ENCODE measurements at regions of chr10 and their contacts with region 1.

Region 1: GRCh38 chr10:102151774-102152544 is at the start of gene NOLC1:
- DNase-seq: peak; percentile 100
- H3K4me3 Mint-ChIP-seq: peak within 1 kb of the TSS; percentile 98
- H3K27ac Mint-ChIP-seq: peak within 1 kb of the TSS; percentile 98
- H3K4me1 Mint-ChIP-seq: peaks cover 28% of the 10 kb centered on the region
- H3K27me3 Mint-ChIP-seq: no peaks in the 10 kb centered on the region
- total RNA-seq, gene NOLC1: 260 and 271 TPM in 2 replicates

Region 2: DNA sequence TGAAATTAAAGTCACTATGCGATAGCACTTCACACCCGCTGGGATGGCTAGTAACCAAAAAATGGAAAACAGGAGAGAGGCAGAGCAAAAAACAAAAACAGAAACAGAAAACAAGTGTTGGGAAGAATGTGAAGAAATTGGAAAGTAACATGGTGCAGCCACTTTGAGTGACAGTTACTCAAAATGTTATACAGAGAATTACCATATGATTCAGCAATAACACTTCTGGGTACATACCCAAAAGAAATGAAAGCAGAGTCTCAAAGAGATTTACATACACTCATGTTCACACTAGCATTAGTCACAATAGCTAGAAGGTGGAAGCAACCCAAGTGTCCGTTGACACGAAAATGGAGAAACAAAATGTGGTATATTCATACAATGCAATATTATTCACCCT is 219.8 kb before region 1 on chr10:
- intact Hi-C with region 1: no loop called
- DNase-seq: no peak
- H3K4me3 Mint-ChIP-seq: no peak overlapping the region
- H3K27ac Mint-ChIP-seq: peak overlapping the region; percentile 20
- H3K4me1 Mint-ChIP-seq: peaks cover 9% of the 10 kb centered on the region
- H3K27me3 Mint-ChIP-seq: no peaks in the 10 kb centered on the region

Region 3: DNA sequence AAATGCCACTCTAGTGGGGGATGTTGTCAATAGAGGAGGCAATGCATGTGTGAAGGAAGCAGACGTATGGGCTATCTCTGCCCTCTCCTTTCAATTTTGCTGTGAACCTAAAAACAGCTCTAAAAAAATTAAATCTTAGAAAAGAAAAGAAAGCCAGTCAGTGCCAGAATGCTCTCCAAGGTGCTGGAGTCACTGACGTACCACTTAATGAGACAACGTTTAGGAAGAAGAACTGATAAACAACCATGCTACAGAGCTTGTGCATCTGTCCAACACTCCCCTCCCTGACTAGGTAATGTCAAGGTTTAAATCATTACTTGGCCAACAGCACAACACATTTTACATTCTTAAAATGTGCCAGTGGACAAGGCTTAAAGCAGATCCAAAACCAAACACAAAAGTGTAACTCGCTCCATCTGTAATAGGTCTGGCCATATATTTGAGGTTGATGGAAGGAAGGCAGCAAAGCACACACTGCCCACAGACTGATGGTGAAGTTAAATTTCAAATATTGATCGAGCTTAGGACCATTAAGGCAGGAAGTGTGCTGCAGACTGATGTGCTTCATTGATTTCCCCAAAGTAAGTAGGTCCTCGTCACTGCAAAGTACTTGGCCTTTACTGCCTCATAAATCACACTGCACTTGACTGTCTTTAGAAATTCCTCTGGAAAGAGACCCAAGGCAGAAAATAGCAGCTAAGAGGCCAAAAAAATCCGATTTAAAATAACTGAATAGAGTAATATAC is 111.5 kb before region 1 on chr10:
- intact Hi-C with region 1: no loop called
- DNase-seq: no peak
- H3K4me3 Mint-ChIP-seq: no peak overlapping the region
- H3K27ac Mint-ChIP-seq: no peak overlapping the region
- H3K4me1 Mint-ChIP-seq: peaks cover 6% of the 10 kb centered on the region
- H3K27me3 Mint-ChIP-seq: no peaks in the 10 kb centered on the region

Region 4: DNA sequence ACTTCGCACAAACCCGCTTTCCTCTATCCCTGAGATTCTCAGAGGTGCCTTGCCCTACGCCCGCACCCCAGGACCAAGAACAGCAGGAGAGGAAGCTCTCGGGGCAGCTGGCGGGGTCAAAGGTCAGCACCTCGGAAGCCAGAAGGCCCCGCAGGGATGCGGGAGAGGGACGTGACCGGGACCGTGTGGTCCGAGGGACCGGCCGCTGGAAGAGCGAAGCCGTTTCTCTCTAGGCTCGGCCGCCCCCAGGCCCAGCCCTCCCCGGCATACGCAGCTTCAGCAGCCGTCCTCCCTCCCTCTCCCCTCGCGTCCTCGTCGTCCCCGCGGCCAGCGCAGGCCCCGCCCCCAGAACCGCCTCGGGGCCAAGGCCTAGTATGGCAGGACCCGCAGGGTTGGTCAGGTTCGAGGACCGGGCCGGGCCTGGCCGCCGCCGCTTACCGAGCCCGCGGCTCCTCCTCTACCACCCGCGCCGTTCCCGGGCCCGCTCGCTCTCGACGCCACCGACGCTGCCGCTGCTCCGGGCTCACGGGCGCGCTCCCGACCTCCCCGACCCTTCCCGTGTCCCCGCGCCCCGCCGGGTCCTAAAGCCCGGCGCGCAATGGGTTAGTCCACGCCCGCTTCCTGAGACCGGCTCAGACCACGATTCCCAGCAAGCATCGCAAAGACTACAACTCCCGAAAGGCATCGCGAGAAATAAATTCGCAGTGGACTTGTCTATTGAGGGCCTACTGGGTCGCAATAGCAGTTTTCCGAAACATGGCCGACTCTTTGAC is 96.1 kb before region 1 on chr10 and contains the start of gene ARMH3:
- intact Hi-C with region 1: loop called (anchors 2 kb)
- DNase-seq: peak; percentile 90
- H3K4me3 Mint-ChIP-seq: peak within 1 kb of the TSS; percentile 89
- H3K27ac Mint-ChIP-seq: peak within 1 kb of the TSS; percentile 94
- H3K4me1 Mint-ChIP-seq: peaks cover 31% of the 10 kb centered on the region
- H3K27me3 Mint-ChIP-seq: no peaks in the 10 kb centered on the region
- total RNA-seq, gene ARMH3: 21.5 and 24.8 TPM in 2 replicates

Region 5: DNA sequence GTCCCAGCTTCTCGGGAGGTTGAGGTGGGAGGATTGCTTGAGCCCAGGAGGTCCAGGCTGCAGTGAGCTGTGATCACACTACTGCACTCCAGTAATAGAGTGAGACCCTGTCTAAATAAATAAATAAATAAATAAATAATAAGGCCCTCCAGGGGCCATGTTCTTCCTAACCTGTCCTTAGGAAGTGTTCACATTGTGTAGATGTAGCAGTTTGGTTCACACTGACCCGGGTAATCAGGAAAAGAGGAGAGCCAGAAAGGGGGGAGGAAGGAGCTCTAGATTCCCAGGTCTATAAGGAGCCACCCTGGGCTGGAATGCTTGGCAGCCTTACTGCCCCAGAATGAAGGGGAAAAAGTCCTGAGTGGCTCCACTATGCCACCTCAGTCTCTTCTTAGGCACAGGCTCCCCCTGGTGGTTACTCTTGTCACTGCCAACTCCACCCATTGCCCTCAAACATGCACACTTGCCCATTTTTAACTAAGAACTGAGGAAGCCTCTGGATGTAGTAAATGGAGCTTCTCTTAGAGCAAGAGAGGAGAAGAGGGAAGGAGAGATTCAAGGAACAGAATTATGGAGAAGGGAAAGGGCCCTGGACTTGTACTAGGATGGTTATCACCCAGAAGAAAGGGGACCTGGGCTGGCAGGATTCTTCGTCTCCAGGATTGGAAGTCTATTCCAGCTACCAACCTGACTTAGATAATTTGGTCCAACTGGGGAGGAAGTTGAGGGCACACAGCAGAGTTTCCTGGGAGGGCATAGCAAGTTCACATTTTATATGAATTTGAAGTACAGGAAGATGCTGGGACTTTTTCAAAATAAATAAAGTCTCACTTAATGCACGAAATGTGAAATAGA is 79.1 kb before region 1 on chr10:
- intact Hi-C with region 1: no loop called
- DNase-seq: peak; percentile 67
- H3K4me3 Mint-ChIP-seq: no peak overlapping the region
- H3K27ac Mint-ChIP-seq: no peak overlapping the region
- H3K4me1 Mint-ChIP-seq: peaks cover 6% of the 10 kb centered on the region
- H3K27me3 Mint-ChIP-seq: no peaks in the 10 kb centered on the region

Region 6: DNA sequence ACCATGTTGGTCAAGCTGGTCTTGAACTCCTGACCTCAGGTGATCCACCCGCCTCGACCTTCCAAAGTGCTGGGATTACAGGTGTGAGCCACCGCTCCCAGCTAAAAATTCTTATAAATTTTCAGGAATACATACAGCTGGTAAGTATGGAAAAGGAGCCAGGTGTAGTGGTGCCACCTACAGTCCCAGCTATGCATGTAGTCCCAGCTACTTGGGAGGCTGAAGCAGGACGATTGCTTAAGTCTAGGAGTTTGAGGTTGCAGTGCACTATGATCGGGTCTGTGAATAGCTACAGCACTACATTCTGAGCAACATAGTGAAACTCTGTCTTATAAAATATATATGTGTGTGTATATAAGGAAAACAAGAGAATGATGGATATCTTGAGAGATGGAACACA is 50.8 kb before region 1 on chr10:
- intact Hi-C with region 1: no loop called
- DNase-seq: no peak
- H3K4me3 Mint-ChIP-seq: no peak overlapping the region
- H3K27ac Mint-ChIP-seq: no peak overlapping the region
- H3K4me1 Mint-ChIP-seq: peaks cover 10% of the 10 kb centered on the region
- H3K27me3 Mint-ChIP-seq: no peaks in the 10 kb centered on the region

Region 7: GRCh38 chr10:102120142-102120990 is 31.6 kb before region 1 on chr10 and contains the start of gene LDB1:
- intact Hi-C with region 1: loop called (anchors 1 kb)
- DNase-seq: peak; percentile 59
- H3K4me3 Mint-ChIP-seq: peak within 1 kb of the TSS; percentile 88
- H3K27ac Mint-ChIP-seq: peak within 1 kb of the TSS; percentile 90
- H3K4me1 Mint-ChIP-seq: peaks cover 52% of the 10 kb centered on the region
- H3K27me3 Mint-ChIP-seq: no peaks in the 10 kb centered on the region
- total RNA-seq, gene LDB1: 78.6 and 87.1 TPM in 2 replicates

Region 8: DNA sequence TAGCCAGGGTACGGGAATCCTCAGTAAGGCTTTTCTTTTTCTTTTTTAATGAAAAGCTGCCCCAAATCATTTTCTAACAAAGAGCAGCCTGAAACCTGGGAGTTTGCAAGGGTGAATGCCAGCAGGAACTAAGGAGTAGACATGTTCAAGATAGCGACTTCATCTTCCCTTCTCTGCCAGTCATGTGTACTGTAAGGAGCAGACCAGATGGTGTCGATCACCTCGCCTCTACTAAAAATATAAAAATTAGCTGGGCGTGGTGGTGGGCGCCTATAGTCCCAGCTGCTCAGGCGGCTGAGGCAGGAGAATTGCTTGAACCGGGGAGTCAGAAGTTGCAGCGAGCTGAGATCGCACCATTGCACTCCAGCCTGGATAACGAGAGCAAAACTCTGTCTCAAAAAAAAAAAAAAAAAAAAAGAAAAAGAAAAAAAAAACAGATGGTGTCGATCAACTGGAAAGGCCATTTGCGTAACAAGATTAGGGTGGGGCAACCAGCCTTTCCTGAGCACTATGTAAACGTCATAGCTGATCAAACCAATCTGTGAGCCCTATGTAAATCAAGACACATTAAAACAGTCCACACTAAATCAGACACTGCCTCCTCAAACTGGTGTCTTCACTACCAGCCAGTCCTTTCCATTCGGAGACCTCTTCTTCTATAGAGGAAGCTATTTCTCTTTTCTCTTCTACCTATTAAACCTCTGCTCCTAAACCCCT is 34.0 kb after region 1 on chr10:
- intact Hi-C with region 1: loop called (anchors 1 kb)
- DNase-seq: no peak
- H3K4me3 Mint-ChIP-seq: no peak overlapping the region
- H3K27ac Mint-ChIP-seq: no peak overlapping the region
- H3K4me1 Mint-ChIP-seq: peaks cover 18% of the 10 kb centered on the region
- H3K27me3 Mint-ChIP-seq: peaks cover 4% of the 10 kb centered on the region

Region 9: GRCh38 chr10:102420810-102421644 is 269.1 kb after region 1 on chr10 and contains the start of gene FBXL15:
- intact Hi-C with region 1: loop called (anchors 1 kb)
- DNase-seq: peak; percentile 96
- H3K4me3 Mint-ChIP-seq: peak within 1 kb of the TSS; percentile 99
- H3K27ac Mint-ChIP-seq: peak within 1 kb of the TSS; percentile 98
- H3K4me1 Mint-ChIP-seq: peaks cover 34% of the 10 kb centered on the region
- H3K27me3 Mint-ChIP-seq: peaks cover 9% of the 10 kb centered on the region
- total RNA-seq, gene FBXL15: 14.5 and 18.5 TPM in 2 replicates